K562 (cell line): ENCODE measurements at regions of chr11 and their contacts with region 1.

Region 1: GRCh38 chr11:75445315-75445953 is 12.4 kb upstream of the KLHL35 start:
- DNase-seq: peak; percentile 80 to 86 (median 84)
- ATAC-seq: peak; percentile 93
- H3K4me3 ChIP-seq: no peak overlapping the region
- H3K27ac ChIP-seq: no peak overlapping the region
- H3K4me1 ChIP-seq: peaks cover 0 to 17% of the 10 kb centered on the region in 2 experiments; a peak in 1 of 5 replicates
- H3K27me3 ChIP-seq: no peaks in the 10 kb centered on the region
- CTCF ChIP-seq: peak; percentile 91 to 99 (median 95)
- EP300 ChIP-seq: no peak
- POLR2A ChIP-seq: no peak
- RAD21 ChIP-seq: peak; percentile 98 to 99

Region 2: GRCh38 chr11:75406338-75406777 is 39.1 kb before region 1 on chr11:
- CTCF ChIA-PET with region 1: no interaction called
- POLR2A ChIA-PET with region 1: interaction called, 6 read pairs
- in situ Hi-C with region 1: no loop called
- intact Hi-C with region 1: loop called (anchors 1 kb)
- DNase-seq: peak; percentile 60 to 78 (median 71)
- ATAC-seq: peak; percentile 58
- H3K4me3 ChIP-seq: no peak overlapping the region
- H3K27ac ChIP-seq: peak overlapping the region; percentile 2; the same call in 2 of the 3 replicates
- H3K4me1 ChIP-seq: peaks cover 17 to 43% of the 10 kb centered on the region in 2 experiments; a peak in 3 of 5 replicates
- H3K27me3 ChIP-seq: no peaks in the 10 kb centered on the region
- CTCF ChIP-seq: no peak
- EP300 ChIP-seq: peak; percentile 91
- POLR2A ChIP-seq: peak; percentile 55
- RAD21 ChIP-seq: no peak

Region 3: GRCh38 chr11:75525596-75526541 is 80.4 kb after region 1 on chr11 and contains the start of gene GDPD5:
- CTCF ChIA-PET with region 1: interaction called, 14 read pairs
- POLR2A ChIA-PET with region 1: interaction called, 6 read pairs
- in situ Hi-C with region 1: loop called (anchors 5 kb)
- intact Hi-C with region 1: no loop called
- DNase-seq: peak; percentile 93 to 97 (median 97)
- ATAC-seq: peak; percentile 95
- H3K4me3 ChIP-seq: peak within 1 kb of the TSS; percentile 63
- H3K27ac ChIP-seq: peak within 1 kb of the TSS; percentile 68
- H3K4me1 ChIP-seq: peaks cover 10 to 34% of the 10 kb centered on the region in 2 experiments; a peak in 4 of 5 replicates
- H3K27me3 ChIP-seq: no peaks in the 10 kb centered on the region
- CTCF ChIP-seq: peak; percentile 39 to 84 (median 72); a peak in 4 of 6 replicates
- EP300 ChIP-seq: no peak
- POLR2A ChIP-seq: peak; percentile 62
- RAD21 ChIP-seq: peak; percentile 55
- polyA plus RNA-seq, gene GDPD5: 0.32 to 0.41 TPM

Region 4: DNA sequence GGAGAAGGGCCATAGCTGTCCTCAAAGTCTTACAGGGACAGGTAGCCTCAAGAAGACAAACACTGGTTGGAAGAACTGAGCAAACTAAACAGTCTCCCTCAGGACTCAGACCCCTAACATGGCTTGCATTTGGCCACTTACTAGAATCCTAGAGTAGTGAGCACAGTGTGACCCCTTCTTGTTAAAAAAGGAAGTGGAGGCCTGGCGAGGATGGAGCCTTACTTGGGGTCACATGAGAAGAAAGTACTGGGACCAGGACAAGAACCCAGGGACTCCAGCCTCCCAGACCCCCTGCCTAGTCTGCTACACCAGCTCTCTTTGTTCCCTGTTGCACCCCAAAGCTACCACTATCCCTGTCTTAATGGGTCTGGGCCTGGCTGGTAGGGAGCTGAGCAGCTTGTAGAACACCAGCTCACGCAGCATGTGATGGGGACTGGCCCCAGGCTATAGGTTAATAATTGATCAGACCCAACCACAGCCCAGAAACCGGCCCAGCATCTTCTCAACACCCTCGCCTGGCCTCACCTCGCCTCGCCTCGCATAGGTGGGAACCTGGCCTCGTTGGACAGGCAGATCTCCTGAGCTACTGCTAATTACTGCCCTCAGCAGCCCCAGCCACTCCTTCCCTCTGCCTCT is 340.8 kb after region 1 on chr11:
- CTCF ChIA-PET with region 1: no interaction called
- POLR2A ChIA-PET with region 1: no interaction called
- in situ Hi-C with region 1: loop called (anchors 10 kb)
- intact Hi-C with region 1: no loop called
- DNase-seq: no peak
- ATAC-seq: no peak
- H3K4me3 ChIP-seq: no peak overlapping the region
- H3K27ac ChIP-seq: no peak overlapping the region
- H3K4me1 ChIP-seq: peaks cover 0 to 2% of the 10 kb centered on the region in 2 experiments; a peak in 1 of 5 replicates
- H3K27me3 ChIP-seq: no peaks in the 10 kb centered on the region
- CTCF ChIP-seq: no peak
- EP300 ChIP-seq: no peak
- POLR2A ChIP-seq: no peak
- RAD21 ChIP-seq: no peak

Region 5: GRCh38 chr11:75867775-75868374 is 422.4 kb after region 1 on chr11:
- CTCF ChIA-PET with region 1: no interaction called
- POLR2A ChIA-PET with region 1: no interaction called
- in situ Hi-C with region 1: loop called (anchors 25 kb)
- intact Hi-C with region 1: no loop called
- DNase-seq: peak; percentile 50 to 66 (median 57)
- ATAC-seq: peak; percentile 77
- H3K4me3 ChIP-seq: no peak overlapping the region
- H3K27ac ChIP-seq: no peak overlapping the region
- H3K4me1 ChIP-seq: no peaks in the 10 kb centered on the region
- H3K27me3 ChIP-seq: no peaks in the 10 kb centered on the region
- CTCF ChIP-seq: peak; percentile 60 to 84 (median 70); a peak in 5 of 6 replicates
- EP300 ChIP-seq: no peak
- POLR2A ChIP-seq: no peak
- RAD21 ChIP-seq: peak; percentile 77 to 84